Left ventricle myocardium superior (tissue), 1 donor: ENCODE measurements at regions of chr12 and their contacts with region 1.

Region 1: DNA sequence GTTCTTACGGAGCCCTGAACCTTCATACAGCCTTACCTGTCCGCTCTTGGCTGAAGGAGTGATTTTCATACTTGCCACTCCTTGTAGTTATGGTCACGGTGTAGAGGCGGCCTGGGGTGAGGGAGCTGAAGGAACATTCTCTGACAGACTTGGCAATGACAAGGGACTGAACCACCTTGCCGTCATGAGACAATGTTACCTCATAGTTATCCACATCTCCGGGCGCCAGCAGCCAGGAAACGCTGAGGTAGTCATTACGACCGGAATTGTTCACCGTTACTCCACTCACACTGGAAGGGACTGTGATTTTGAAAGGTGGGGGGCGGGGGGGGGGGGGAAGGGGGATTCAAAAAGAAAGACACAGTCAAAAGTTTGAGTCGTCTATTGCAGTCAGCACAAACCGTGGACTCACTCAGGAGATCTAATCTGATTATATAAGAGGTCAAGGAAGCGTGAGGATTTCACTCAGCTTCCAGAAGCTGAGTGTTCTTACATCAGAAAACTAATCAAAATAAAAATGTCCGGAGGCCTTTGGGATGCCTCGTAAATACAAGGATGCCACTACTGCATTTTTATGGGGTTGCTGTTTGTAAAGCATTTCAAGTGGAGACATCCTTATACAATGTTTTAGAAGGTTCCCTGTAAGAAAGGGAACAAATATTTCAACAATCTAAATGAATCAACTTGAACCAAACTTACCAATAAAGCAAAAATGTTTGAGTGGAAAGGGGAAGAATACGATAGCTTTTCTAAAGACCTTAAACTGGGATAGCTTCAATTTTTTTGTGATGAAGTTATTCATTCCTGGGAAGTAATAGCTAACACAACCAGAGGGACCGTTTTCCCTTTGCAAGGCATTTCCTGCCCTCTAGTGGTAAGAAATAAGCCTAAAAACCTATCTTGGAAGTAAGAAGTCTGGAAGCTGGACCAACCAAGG is 60.6 kb downstream of the PTPRB start:
- DNase-seq: no peak
- ATAC-seq: peak; percentile 78

Region 2: DNA sequence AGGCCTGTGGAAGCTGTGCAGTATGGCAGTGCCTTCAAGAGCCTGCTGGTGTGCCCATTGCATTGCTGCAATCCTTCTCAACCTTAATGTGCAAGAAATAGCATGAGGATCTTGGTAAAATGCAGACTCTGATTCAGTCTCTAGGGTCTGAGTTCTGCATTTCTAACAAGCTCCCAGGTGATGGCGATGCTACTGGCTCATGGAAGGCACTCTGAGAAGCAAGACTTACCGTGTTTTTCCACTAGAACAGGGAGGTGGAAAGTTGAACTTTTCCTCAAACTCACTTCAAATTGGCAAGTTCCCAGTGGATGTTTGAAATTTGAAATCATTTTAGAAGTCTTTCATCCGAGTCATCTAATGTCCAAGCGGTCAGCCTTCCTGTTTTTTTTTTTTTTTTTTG is 696.0 kb before region 1 on chr12:
- intact Hi-C with region 1: loop called (anchors 5 kb)
- DNase-seq: no peak
- ATAC-seq: no peak

Region 3: GRCh38 chr12:69900720-69901131 is 675.9 kb before region 1 on chr12:
- intact Hi-C with region 1: loop called (anchors 5 kb)
- DNase-seq: peak; percentile 52
- ATAC-seq: peak; percentile 45

Region 4: GRCh38 chr12:71663561-71664294 is 1087.1 kb after region 1 on chr12 and contains the start of gene ZFC3H1:
- intact Hi-C with region 1: no loop called
- DNase-seq: peak; percentile 91
- ATAC-seq: peak; percentile 96
- total RNA-seq, gene ZFC3H1: 15.3 TPM